GM12878 (cell line): ENCODE measurements at regions of chr15 and their contacts with region 1.

Region 1: DNA sequence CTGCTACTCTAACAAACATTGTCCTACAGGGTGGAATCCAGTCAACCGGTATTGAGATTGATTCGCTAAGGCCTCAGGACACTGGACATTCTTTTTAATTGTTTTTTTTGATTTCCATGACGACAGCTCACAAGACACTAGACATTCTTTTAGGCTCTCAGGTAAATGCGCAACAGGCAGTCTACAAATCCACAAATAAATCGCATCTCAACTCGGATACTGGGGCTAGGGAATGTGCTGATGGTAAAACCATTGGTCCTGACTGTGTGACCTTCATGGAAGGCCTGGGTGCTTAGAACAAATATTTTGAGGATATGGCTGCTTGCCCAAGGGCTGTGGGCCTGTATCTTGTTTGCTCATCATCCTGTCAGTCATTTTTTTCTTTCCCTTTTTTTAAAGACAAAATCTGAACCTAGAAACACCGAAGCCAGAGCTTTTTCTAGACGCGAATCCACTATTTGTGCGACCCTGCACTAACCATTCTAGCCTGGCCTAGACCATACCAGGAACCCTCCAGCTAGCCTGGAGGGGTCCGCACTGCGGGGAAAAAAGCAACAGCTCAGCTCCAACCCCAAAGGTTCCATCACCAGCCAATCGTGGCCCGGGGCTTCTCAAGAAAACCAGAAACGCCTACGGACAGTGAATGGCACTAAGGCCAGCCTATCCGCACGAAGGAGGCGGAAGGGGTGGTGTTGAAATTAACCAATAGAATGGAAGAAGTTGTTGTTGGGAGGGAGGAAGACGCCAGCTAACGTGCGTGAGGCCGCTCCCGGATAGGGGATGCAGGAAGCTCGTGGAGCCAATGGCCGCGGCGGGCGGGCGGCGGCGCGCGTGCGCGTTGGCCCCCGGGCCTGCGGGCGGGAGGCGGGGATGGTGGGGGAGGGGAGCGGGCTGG is 18.1 kb upstream of the CHD2 start:
- DNase-seq: peak; percentile 100
- ATAC-seq: peak; percentile 90
- H3K4me3 ChIP-seq: peak overlapping the region; percentile 62
- H3K27ac ChIP-seq: peak overlapping the region; percentile 96
- H3K4me1 ChIP-seq: peaks cover 5% of the 10 kb centered on the region; the same call in 1 of the 2 replicates
- H3K27me3 ChIP-seq: no peaks in the 10 kb centered on the region
- CTCF ChIP-seq: no peak
- EP300 ChIP-seq: no peak
- POLR2A ChIP-seq: peak; percentile 77
- RAD21 ChIP-seq: no peak

Region 2: DNA sequence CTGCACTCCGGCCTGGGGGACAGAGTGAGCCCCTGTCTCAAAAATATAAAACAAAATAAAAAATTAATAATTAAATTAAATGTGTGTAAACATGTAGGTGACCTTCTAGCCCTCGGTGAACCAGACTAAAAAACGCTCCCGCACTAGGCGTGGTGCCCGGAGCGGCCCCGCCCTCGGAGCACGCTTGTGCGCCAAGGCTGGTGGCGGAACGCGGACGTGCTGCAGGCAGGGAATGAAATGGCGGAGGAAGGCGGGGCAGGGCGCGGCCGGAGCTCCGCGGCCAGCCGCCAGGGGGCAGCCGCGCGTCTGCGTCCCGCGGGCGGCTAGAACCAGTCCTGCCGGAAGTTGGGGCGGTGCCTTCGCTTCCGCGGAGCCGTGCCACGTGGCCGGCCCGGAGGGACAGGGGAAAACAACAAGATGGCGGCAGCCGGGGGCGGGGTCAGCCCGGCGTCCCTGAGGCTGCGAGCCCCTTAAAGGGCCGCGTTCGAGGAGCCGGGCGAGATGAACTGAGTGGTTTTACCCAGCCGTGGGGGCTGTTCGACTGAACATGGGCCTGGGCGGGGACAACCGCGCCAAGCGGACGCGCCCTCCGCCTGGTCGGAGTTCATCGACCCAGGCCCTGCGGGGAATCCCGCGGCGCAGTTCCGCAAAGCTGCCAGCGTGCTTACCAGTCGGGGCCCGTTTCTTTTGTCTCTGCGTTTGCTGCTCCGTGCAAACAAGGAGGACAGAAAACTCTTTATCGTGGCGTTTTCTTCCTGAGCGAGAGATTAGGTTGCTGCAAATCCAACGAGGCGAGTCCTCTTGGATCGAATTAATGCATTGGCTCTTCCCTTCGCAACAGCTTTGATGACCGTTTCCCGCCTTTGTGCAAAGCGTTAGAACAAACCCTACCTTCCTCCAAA is 72.8 kb before region 1 on chr15:
- CTCF ChIA-PET with region 1: interaction called, 25 read pairs
- POLR2A ChIA-PET with region 1: interaction called, 117 read pairs
- RAD21 ChIA-PET with region 1: interaction called, 174 read pairs
- SMC1A ChIA-PET with region 1: interaction called, 46 read pairs
- in situ Hi-C with region 1: loop called (anchors 10 kb)
- intact Hi-C with region 1: loop called (anchors 1 kb)
- DNase-seq: peak; percentile 94
- ATAC-seq: peak; percentile 87
- H3K4me3 ChIP-seq: peak overlapping the region; percentile 79
- H3K27ac ChIP-seq: peak overlapping the region; percentile 100
- H3K4me1 ChIP-seq: peaks cover 2% of the 10 kb centered on the region
- H3K27me3 ChIP-seq: no peaks in the 10 kb centered on the region
- CTCF ChIP-seq: peak; percentile 75 to 99 (median 90); a peak in 5 of 6 replicates
- EP300 ChIP-seq: peak in 1 of 2 experiments; percentile 52; a peak in 2 of 4 replicates
- POLR2A ChIP-seq: peak; percentile 92
- RAD21 ChIP-seq: peak; percentile 61

Region 3: GRCh38 chr15:92839696-92840095 is 42.4 kb before region 1 on chr15:
- CTCF ChIA-PET with region 1: interaction called, 5 read pairs
- POLR2A ChIA-PET with region 1: interaction called, 134 read pairs
- RAD21 ChIA-PET with region 1: interaction called, 121 read pairs
- SMC1A ChIA-PET with region 1: interaction called, 16 read pairs
- in situ Hi-C with region 1: no loop called
- intact Hi-C with region 1: no loop called
- DNase-seq: no peak
- ATAC-seq: peak; percentile 89
- H3K4me3 ChIP-seq: no peak overlapping the region
- H3K27ac ChIP-seq: peak overlapping the region; percentile 57
- H3K4me1 ChIP-seq: peaks cover 20% of the 10 kb centered on the region
- H3K27me3 ChIP-seq: no peaks in the 10 kb centered on the region
- CTCF ChIP-seq: no peak
- EP300 ChIP-seq: no peak
- POLR2A ChIP-seq: 0 out of 2 replicates have a peak, but pooled peaks have one; percentile 27
- RAD21 ChIP-seq: no peak

Region 4: DNA sequence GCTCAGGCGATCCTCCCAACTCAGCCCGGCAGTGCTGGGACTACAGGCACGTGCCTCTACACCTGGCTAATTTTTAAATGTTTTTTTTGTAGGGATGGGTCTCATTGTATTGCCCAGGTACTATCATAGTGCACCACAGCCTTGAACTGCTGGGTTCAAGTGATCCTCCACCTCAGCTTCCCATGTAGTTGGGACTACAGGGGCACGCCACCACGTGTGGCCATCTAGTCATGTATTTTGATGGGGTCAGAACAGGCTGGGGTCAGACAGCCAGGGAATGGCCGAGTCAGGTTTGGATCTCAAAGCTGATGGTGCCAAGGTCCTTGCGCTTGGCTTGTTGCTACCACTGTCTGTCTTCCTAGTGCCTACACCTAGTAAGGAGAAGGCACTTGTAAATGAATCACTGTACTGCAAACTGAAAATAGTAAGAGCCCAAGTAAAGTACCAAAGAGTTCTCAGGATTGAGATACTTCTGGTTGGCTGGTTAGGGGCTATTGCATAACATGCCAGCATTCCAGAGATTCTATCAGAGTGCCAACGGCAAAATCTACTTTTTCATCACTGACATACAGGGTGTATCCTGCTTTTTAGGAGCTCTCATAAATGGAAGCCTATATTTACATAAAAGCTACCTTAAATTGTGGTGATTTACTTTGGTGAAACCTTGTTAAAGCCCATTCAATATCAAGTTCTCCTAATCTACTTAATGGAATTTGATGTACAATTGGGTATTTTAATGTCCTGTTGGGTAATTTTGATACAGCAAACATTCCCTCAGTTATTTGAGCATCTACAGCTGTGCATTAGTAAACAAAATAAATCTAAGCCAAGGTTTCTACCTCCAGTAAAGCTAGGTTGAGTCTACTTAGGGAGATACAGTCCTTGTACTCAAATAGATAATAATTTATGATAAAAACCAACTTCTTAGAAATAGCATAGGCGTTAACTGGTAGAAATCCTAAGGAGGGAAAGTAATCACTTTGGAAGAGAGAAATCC is 12.8 kb before region 1 on chr15:
- CTCF ChIA-PET with region 1: no interaction called
- POLR2A ChIA-PET with region 1: interaction called, 5 read pairs
- RAD21 ChIA-PET with region 1: interaction called, 3 read pairs
- SMC1A ChIA-PET with region 1: interaction called, 16 read pairs
- in situ Hi-C with region 1: no loop called
- intact Hi-C with region 1: no loop called
- DNase-seq: no peak
- ATAC-seq: no peak
- H3K4me3 ChIP-seq: no peak overlapping the region
- H3K27ac ChIP-seq: no peak overlapping the region
- H3K4me1 ChIP-seq: no peaks in the 10 kb centered on the region
- H3K27me3 ChIP-seq: no peaks in the 10 kb centered on the region
- CTCF ChIP-seq: no peak
- EP300 ChIP-seq: no peak
- POLR2A ChIP-seq: no peak
- RAD21 ChIP-seq: no peak

Region 5: GRCh38 chr15:92903941-92904831 is 22.1 kb after region 1 on chr15:
- CTCF ChIA-PET with region 1: interaction called, 19 read pairs
- POLR2A ChIA-PET with region 1: interaction called, 207 read pairs
- RAD21 ChIA-PET with region 1: interaction called, 100 read pairs
- SMC1A ChIA-PET with region 1: interaction called, 252 read pairs
- in situ Hi-C with region 1: no loop called
- intact Hi-C with region 1: loop called (anchors 1 kb)
- DNase-seq: peak; percentile 94
- ATAC-seq: peak; percentile 78
- H3K4me3 ChIP-seq: peak overlapping the region; percentile 95
- H3K27ac ChIP-seq: peak overlapping the region; percentile 98
- H3K4me1 ChIP-seq: peaks cover 13% of the 10 kb centered on the region
- H3K27me3 ChIP-seq: no peaks in the 10 kb centered on the region
- CTCF ChIP-seq: no peak
- EP300 ChIP-seq: peak in 1 of 2 experiments; percentile 49; a peak in 1 of 4 replicates
- POLR2A ChIP-seq: peak; percentile 93
- RAD21 ChIP-seq: no peak

Region 6: DNA sequence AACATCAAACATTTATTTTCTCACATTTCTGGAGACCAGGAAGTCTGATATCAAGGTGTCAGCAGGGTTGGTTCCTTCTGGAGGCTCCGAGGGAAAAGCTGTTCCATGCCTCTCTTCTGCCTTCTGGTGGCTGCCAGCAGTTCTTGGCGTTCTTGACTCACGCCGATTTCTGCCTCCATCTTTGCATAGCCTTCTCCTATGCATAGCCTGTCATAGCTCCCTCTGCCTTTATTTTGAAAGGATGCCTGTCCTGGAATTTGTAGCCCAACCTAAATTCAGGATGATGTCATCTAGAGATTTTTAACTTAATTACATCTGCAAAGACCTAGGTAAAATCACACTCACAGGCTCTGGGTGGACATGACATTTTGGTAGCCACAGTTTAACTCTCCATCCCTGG is 136.5 kb after region 1 on chr15:
- CTCF ChIA-PET with region 1: no interaction called
- POLR2A ChIA-PET with region 1: no interaction called
- RAD21 ChIA-PET with region 1: no interaction called
- SMC1A ChIA-PET with region 1: no interaction called
- in situ Hi-C with region 1: no loop called
- intact Hi-C with region 1: no loop called
- DNase-seq: no peak
- ATAC-seq: no peak
- H3K4me3 ChIP-seq: no peak overlapping the region
- H3K27ac ChIP-seq: no peak overlapping the region
- H3K4me1 ChIP-seq: peaks cover 13% of the 10 kb centered on the region
- H3K27me3 ChIP-seq: no peaks in the 10 kb centered on the region
- CTCF ChIP-seq: 0 out of 6 replicates have a peak, but pooled peaks of 1 of the 3 experiments have one; percentile 3
- EP300 ChIP-seq: no peak
- POLR2A ChIP-seq: no peak
- RAD21 ChIP-seq: no peak

Region 7: GRCh38 chr15:93048759-93049161 is 166.7 kb after region 1 on chr15:
- CTCF ChIA-PET with region 1: no interaction called
- POLR2A ChIA-PET with region 1: no interaction called
- RAD21 ChIA-PET with region 1: no interaction called
- SMC1A ChIA-PET with region 1: no interaction called
- in situ Hi-C with region 1: no loop called
- intact Hi-C with region 1: no loop called
- DNase-seq: no peak
- ATAC-seq: no peak
- H3K4me3 ChIP-seq: no peak overlapping the region
- H3K27ac ChIP-seq: no peak overlapping the region
- H3K4me1 ChIP-seq: no peaks in the 10 kb centered on the region
- H3K27me3 ChIP-seq: no peaks in the 10 kb centered on the region
- CTCF ChIP-seq: no peak
- EP300 ChIP-seq: no peak
- POLR2A ChIP-seq: no peak
- RAD21 ChIP-seq: no peak